ENCODE measurements at regions of chr14 and their contacts with region 1.

Region 1: GRCh38 chr14:59438195-59438647 is 27.0 kb downstream of the GPR135 start:
- DNase-seq: no peak
- CTCF ChIP-seq: no peak

Region 2: GRCh38 chr14:58826845-58827686 is 611.2 kb before region 1 on chr14:
- in situ Hi-C with region 1: no loop called
- DNase-seq: no peak
- CTCF ChIP-seq: peak; percentile 28

Region 3: GRCh38 chr14:59126710-59127432 is 311.4 kb before region 1 on chr14:
- in situ Hi-C with region 1: loop called (anchors 5 kb)
- DNase-seq: peak; percentile 51
- CTCF ChIP-seq: peak; percentile 67

Region 4: GRCh38 chr14:59986556-59987059 is 548.4 kb after region 1 on chr14:
- in situ Hi-C with region 1: no loop called
- DNase-seq: no peak
- CTCF ChIP-seq: no peak

Measured in GM13977 (cell line).